GM12878 (cell line): ENCODE measurements at regions of chr9 and their contacts with region 1.

Region 1: DNA sequence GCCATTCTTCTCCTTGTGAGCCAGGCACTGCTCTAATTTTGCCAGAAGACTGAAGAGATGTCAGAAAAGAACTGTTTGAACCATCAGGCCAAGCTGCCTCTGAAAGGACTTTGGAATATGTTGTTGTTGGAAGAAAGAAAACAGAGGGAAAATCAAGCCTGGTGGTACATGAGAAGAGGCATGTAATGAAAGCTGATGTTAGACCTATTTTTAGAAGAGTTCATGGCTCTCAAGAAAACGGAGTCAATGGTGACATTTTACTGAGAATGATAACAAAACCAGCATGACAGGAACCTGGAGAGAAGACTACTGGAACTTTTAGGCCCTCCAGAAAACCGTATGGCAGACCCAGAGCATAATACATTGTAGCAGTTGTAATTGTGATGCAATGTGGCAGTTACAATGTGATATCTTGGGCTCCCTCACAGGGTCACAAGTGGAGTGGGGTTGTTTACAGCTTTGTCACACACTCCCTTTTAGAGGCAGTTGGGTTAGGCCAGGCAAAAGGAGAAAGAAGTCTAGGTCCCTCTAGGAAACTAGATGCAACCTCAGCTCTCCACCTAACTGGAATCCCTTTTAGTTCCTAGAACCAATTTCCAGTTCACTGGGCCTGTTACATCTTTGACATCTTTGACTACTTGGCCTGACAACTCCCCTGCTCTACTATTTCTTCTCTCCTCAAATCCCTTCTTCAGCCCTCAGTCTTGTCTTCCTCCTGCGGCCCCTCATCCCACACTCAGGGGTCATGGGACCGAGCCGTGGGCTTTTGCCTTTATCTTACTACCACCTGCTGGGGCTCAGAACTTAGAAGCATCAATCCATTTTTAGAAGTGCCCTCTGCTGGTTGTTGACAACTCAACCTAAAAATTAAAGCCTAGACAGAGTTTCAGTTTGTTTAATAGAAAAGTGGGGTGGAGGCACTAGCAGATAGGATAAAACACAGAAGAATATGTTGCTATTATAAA is 61.2 kb upstream of the JAK2 start:
- DNase-seq: no peak
- ATAC-seq: peak; percentile 92
- H3K4me3 ChIP-seq: no peak overlapping the region
- H3K27ac ChIP-seq: no peak overlapping the region
- H3K4me1 ChIP-seq: peaks cover 7% of the 10 kb centered on the region; the same call in 1 of the 2 replicates
- H3K27me3 ChIP-seq: no peaks in the 10 kb centered on the region
- CTCF ChIP-seq: peak; percentile 55 to 70 (median 55)
- EP300 ChIP-seq: no peak
- POLR2A ChIP-seq: no peak
- RAD21 ChIP-seq: peak; percentile 78

Region 2: DNA sequence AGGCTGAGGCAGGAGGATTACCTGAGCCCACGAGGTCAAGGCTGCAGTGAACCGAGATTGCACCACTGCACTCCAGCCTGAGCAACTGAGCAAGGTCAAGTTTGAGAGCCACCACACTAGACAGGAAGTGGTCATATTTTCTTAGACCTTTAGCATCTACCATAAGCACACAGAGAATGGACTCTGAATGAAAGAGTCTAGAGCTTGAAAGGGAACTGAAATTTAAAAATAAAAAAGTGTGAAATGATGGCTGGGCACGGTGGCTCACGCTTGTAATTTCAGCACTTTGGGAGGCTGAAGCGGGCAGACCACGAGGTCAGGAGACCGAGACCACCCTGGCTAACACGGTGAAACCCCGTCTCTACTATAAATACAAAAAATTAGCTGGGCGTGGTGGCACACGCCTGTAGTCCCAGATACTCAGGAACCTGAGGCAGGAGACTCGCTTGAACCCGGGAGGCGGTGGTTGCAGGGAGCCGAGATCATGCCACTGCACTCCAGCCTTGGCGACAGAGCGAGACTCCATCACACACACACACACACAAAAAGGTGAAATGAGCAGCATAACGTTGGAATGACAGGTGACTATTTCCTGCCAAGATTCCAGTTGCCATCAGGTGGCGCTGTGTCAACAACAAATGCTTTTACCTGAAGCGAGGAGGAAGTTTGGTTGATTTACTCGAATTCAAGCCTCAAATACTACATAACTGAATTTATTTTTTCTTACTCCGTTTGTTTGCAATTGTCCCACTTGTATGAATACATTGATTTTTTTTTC is 161.6 kb before region 1 on chr9:
- CTCF ChIA-PET with region 1: interaction called, 64 read pairs
- POLR2A ChIA-PET with region 1: no interaction called
- RAD21 ChIA-PET with region 1: interaction called, 27 read pairs
- SMC1A ChIA-PET with region 1: interaction called, 33 read pairs
- in situ Hi-C with region 1: no loop called
- intact Hi-C with region 1: loop called (anchors 1 kb)
- DNase-seq: peak; percentile 81
- ATAC-seq: peak; percentile 92
- H3K4me3 ChIP-seq: peak overlapping the region; percentile 56
- H3K27ac ChIP-seq: peak overlapping the region; percentile 60
- H3K4me1 ChIP-seq: peaks cover 18% of the 10 kb centered on the region
- H3K27me3 ChIP-seq: no peaks in the 10 kb centered on the region
- CTCF ChIP-seq: peak; percentile 71 to 84 (median 84); a peak in 5 of 6 replicates
- EP300 ChIP-seq: peak in 1 of 2 experiments; percentile 41; a peak in 1 of 4 replicates
- POLR2A ChIP-seq: no peak
- RAD21 ChIP-seq: peak; percentile 96

Region 3: DNA sequence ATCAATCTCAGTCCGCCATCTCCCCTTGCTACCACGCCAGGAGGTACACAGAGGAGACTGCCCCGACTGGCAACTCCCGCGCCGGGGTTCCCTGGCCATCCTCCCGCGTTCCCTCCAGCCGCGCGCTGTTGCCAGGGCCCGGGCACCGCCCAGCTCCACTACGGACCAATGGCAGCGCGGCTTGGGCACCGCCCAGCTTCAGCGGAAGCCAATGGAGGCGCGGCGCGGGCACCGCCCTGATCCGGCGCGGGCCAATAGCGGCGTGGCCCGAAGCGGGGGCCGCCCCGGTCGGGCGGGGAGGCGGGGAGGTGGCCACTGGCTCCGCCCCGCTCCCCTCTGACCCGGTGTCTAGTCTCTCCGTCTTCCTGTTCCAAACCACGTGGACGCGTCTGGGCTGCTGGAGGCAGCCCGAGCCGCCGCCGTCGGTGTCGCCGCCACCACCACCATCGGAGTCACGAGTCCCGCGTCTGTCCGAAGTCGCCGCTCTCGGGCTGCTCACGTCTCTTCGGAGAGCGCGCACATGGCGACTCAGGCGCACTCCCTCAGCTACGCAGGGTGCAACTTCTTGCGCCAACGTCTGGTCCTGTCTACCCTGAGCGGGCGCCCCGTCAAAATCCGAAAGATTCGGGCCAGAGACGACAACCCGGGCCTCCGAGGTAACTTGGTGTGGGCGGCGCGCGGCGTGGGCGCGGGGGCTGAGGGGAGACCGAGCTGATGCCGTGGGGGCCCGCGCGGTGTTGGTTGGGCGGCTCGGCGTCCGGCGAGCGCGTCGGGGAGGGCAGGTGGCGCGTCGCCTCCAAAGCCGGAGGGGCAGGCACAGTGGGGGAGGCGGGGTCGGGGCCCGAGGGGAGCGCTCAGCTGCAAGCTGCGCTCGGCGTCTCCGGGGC is 131.0 kb before region 1 on chr9 and contains the start of gene RCL1:
- CTCF ChIA-PET with region 1: interaction called, 16 read pairs
- POLR2A ChIA-PET with region 1: no interaction called
- RAD21 ChIA-PET with region 1: interaction called, 14 read pairs
- SMC1A ChIA-PET with region 1: interaction called, 6 read pairs
- in situ Hi-C with region 1: no loop called
- intact Hi-C with region 1: no loop called
- DNase-seq: peak; percentile 83
- ATAC-seq: peak; percentile 97
- H3K4me3 ChIP-seq: peak within 1 kb of the TSS; percentile 82
- H3K27ac ChIP-seq: peak within 1 kb of the TSS; percentile 82
- H3K4me1 ChIP-seq: peaks cover 7% of the 10 kb centered on the region
- H3K27me3 ChIP-seq: no peaks in the 10 kb centered on the region
- CTCF ChIP-seq: no peak
- EP300 ChIP-seq: no peak
- POLR2A ChIP-seq: peak; percentile 97
- RAD21 ChIP-seq: peak; percentile 6; the same call in 1 of the 2 replicates
- polyA plus RNA-seq, gene RCL1: 21.1 to 28.6 TPM

Region 4: DNA sequence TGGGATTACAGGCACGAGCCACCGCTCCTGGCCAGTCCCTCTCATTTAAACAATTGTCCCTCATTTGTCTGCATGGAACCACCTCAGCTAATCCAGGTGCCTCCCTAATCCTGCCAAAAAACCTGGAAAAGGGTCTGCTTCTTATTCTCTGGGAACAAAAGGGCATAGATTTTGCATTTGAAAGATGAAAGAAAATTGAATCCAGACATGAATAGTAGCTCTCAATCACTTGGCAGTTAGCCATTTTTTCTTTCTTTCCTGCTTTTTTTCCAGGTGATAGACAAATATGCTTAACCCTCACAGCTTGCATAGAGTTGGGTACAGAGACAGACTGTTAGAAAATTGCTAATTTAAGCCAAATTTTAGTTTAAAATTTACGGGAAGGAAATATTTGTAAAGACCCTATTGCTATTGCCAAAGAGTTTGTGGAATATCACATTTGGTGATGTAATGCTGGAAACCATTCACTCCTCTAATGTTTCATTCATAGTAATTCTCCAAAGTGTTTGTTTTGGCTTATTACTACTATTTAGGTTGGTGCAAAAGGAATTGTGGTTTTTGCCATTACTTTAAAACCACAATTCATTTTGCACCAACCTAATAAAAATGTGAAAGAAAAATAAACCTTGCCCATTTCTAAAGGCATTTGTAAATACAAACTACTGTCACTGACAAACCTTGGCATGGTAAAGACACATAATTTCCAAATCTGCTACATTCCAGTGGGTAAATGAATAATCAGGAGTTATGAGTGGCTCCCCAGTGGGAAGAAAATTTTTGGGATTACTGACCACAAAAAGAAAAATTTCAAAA is 19.3 kb before region 1 on chr9:
- CTCF ChIA-PET with region 1: interaction called, 10 read pairs
- POLR2A ChIA-PET with region 1: no interaction called
- RAD21 ChIA-PET with region 1: no interaction called
- SMC1A ChIA-PET with region 1: interaction called, 3 read pairs
- in situ Hi-C with region 1: no loop called
- intact Hi-C with region 1: no loop called
- DNase-seq: no peak
- ATAC-seq: no peak
- H3K4me3 ChIP-seq: no peak overlapping the region
- H3K27ac ChIP-seq: no peak overlapping the region
- H3K4me1 ChIP-seq: 0 out of 2 replicates have a peak, but pooled peaks cover 4% of the 10 kb centered on the region
- H3K27me3 ChIP-seq: no peaks in the 10 kb centered on the region
- CTCF ChIP-seq: no peak
- EP300 ChIP-seq: no peak
- POLR2A ChIP-seq: no peak
- RAD21 ChIP-seq: no peak

Region 5: DNA sequence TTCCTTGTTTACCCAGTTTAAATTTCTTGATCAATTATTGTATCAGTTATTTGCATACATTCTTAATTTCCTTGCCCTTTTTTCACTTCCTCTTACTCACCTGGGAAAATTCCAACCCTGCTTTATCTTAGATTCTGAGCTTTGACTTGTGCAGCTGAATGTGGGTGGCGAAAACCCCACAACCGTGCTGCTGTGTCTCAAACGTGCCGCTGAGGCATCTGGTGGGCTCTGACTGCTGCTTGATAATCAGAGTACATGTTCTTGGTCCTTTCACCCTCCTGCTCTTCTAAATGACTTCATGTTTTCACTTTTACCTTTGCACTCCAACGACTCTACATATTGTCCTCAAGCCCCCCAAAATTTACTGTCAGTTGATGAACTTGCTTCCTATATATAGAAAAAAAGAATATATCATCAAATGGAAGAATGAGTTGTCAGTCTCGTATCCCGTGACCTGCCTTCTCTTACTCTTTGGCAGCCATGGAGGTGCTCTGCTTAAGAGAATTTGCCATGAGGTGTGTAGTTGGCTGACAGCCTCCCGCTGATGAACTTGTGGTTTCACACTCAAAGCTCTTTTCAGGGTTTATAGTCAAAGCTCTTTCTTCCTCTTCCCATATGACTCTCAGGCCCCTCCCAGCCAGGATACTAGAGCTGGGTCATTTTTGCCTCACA is 47.2 kb after region 1 on chr9:
- CTCF ChIA-PET with region 1: interaction called, 11 read pairs
- POLR2A ChIA-PET with region 1: interaction called, 3 read pairs
- RAD21 ChIA-PET with region 1: interaction called, 4 read pairs
- SMC1A ChIA-PET with region 1: interaction called, 12 read pairs
- in situ Hi-C with region 1: no loop called
- intact Hi-C with region 1: no loop called
- DNase-seq: peak; percentile 76
- ATAC-seq: peak; percentile 95
- H3K4me3 ChIP-seq: peak overlapping the region; percentile 50; the same call in 1 of the 2 replicates
- H3K27ac ChIP-seq: peak overlapping the region; percentile 50
- H3K4me1 ChIP-seq: peaks cover 17% of the 10 kb centered on the region
- H3K27me3 ChIP-seq: no peaks in the 10 kb centered on the region
- CTCF ChIP-seq: no peak
- EP300 ChIP-seq: peak; percentile 36 to 64; a peak in 3 of 4 replicates
- POLR2A ChIP-seq: no peak
- RAD21 ChIP-seq: no peak